ENCODE measurements at regions of chr3 and their contacts with region 1.

Region 1: GRCh38 chr3:125310623-125311081 is 64.5 kb downstream of the ZNF148 start:
- DNase-seq: peak; percentile 73
- ATAC-seq: peak; percentile 89
- H3K4me3 Mint-ChIP-seq: peak overlapping the region; percentile 72
- H3K27ac Mint-ChIP-seq: peak overlapping the region; percentile 86
- H3K4me1 Mint-ChIP-seq: peaks cover 49% of the 10 kb centered on the region
- H3K27me3 Mint-ChIP-seq: no peaks in the 10 kb centered on the region

Region 2: DNA sequence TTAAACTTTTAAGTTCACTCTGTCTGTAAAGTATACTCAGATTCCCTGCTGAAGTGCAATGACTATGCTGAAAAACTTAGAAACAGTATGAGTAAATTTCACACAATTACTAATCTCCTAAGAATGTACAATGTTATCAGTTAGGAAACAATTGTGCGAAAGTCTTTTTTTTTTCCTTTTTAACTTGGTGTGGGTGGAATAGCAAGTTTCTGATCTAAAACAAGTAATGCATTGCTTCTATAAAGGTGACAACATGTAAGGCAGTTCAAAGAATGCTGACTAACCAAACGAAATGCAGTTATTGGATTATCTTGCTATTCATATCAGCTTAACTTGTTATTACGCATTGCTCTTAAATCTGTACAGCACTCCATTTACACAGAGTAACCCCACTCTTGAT is 78.8 kb before region 1 on chr3:
- CTCF ChIA-PET with region 1: interaction called, 3 read pairs
- POLR2A ChIA-PET with region 1: no interaction called
- intact Hi-C with region 1: loop called in 1 of 2 experiments (anchors 2 kb)
- DNase-seq: no peak
- ATAC-seq: peak; percentile 92
- H3K4me3 Mint-ChIP-seq: no peak overlapping the region
- H3K27ac Mint-ChIP-seq: peak overlapping the region; percentile 82
- H3K4me1 Mint-ChIP-seq: peaks cover 22% of the 10 kb centered on the region
- H3K27me3 Mint-ChIP-seq: no peaks in the 10 kb centered on the region

Region 3: GRCh38 chr3:125331243-125331642 is 20.6 kb after region 1 on chr3:
- CTCF ChIA-PET with region 1: interaction called, 3 read pairs
- POLR2A ChIA-PET with region 1: no interaction called
- intact Hi-C with region 1: loop called in 1 of 2 experiments (anchors 2 kb)
- DNase-seq: no peak
- ATAC-seq: no peak
- H3K4me3 Mint-ChIP-seq: no peak overlapping the region
- H3K27ac Mint-ChIP-seq: peak overlapping the region; percentile 4
- H3K4me1 Mint-ChIP-seq: peaks cover 28% of the 10 kb centered on the region
- H3K27me3 Mint-ChIP-seq: no peaks in the 10 kb centered on the region

Region 4: DNA sequence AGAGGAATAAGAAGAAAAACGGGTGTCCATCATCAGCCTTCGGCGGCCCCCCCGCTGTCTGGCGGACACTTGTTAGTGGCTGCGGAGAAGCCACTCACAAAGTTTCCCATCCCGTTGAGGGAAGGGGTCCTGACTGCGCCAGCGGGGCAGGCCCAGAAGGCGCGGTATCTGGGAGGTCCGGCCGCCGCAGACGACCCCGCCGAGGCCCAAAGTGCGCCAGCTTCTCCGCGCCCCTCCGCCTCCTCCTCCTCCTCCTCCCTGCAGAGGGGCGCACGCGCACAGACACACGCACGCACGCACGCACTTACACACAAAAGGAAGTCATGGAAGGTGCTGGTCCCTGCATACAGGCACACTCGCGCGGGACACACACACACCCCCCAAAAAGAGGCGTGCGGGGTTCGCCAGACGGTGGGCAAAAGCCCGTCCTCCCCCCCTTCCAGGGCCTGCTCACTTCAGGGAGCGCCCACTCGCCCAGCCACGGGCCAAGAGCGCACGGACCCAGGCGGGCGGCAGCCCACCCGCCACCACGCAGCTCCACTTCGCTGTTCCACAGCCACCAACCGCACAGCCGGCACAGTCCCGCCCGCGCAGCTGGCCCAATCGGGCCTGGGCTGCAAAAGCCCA is 46.5 kb after region 1 on chr3:
- CTCF ChIA-PET with region 1: no interaction called
- POLR2A ChIA-PET with region 1: no interaction called
- intact Hi-C with region 1: loop called in 1 of 2 experiments (anchors 5 kb)
- DNase-seq: peak; percentile 80
- ATAC-seq: peak; percentile 95
- H3K4me3 Mint-ChIP-seq: peak overlapping the region; percentile 74
- H3K27ac Mint-ChIP-seq: peak overlapping the region; percentile 84
- H3K4me1 Mint-ChIP-seq: peaks cover 60% of the 10 kb centered on the region
- H3K27me3 Mint-ChIP-seq: no peaks in the 10 kb centered on the region

Measured in activated CD4-positive, alpha-beta T cell treated with anti-CD3 and anti-CD28 coated beads for 36 hours (primary cell).